A549 (cell line): ENCODE measurements at regions of chr5 and their contacts with region 1.

Region 1: DNA sequence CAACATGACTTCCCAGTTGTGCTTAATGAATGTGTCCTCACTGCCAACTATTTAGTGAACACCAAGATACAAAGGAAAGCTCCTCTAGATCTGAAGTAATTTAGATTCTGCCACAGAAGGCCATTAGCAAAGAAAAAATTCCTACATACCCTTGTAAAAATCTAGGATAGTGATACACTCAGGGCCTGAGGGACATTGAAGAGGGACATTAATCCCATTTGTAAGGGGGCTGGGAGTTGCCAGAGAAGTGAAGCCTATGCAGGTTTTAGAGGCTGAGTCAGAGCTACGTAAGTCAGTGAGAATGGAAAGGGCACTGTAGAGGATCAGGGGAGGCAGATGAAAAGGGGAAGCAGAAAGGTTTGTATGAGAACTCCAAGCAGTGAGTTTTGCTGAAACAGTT is 286.9 kb upstream of the TARS1 start:
- DNase-seq: no peak
- ATAC-seq: no peak
- H3K4me3 ChIP-seq: no peak overlapping the region
- H3K27ac ChIP-seq: no peak overlapping the region
- H3K4me1 ChIP-seq: peaks cover 4% of the 10 kb centered on the region
- CTCF ChIP-seq: no peak
- EP300 ChIP-seq: no peak
- POLR2A ChIP-seq: no peak
- RAD21 ChIP-seq: no peak

Region 2: GRCh38 chr5:32734827-32735378 is 418.9 kb before region 1 on chr5:
- CTCF ChIA-PET with region 1: no interaction called
- POLR2A ChIA-PET with region 1: no interaction called
- DNase-seq: no peak
- ATAC-seq: peak; percentile 43 to 51; a peak in 4 of 6 replicates
- H3K4me3 ChIP-seq: no peak overlapping the region
- H3K27ac ChIP-seq: no peak overlapping the region
- H3K4me1 ChIP-seq: peaks cover 4% of the 10 kb centered on the region; the same call in 1 of the 3 replicates
- CTCF ChIP-seq: no peak
- EP300 ChIP-seq: no peak
- POLR2A ChIP-seq: no peak
- RAD21 ChIP-seq: no peak

Region 3: DNA sequence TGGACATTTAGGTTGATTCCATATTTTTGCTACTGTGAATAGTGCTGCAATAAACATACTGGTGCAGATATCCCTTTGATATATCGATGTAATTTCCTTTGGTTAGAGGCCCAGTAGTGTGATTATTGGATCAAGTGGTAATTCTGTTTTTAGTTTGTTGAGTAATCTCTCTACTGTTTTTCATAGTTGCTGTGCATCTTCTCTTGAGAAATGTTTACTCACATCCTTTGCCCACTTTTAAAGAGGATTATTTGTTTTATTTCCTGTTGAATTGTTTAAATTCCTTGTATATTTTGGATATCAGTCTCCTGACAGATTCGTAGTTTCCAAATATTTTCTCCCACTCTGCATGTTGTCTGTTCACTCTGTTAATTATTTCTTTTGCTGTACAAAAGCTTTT is 65.7 kb before region 1 on chr5:
- CTCF ChIA-PET with region 1: no interaction called
- POLR2A ChIA-PET with region 1: no interaction called
- DNase-seq: no peak
- ATAC-seq: no peak
- H3K4me3 ChIP-seq: no peak overlapping the region
- H3K27ac ChIP-seq: no peak overlapping the region
- H3K4me1 ChIP-seq: peaks cover 19% of the 10 kb centered on the region; the same call in 2 of the 3 replicates
- CTCF ChIP-seq: no peak
- EP300 ChIP-seq: no peak; a peak in 1 of 5 replicates
- POLR2A ChIP-seq: no peak
- RAD21 ChIP-seq: no peak

Region 4: GRCh38 chr5:33129309-33129708 is 24.5 kb before region 1 on chr5:
- CTCF ChIA-PET with region 1: no interaction called
- POLR2A ChIA-PET with region 1: no interaction called
- DNase-seq: no peak
- ATAC-seq: no peak
- H3K4me3 ChIP-seq: no peak overlapping the region
- H3K27ac ChIP-seq: no peak overlapping the region
- H3K4me1 ChIP-seq: no peaks in the 10 kb centered on the region
- CTCF ChIP-seq: no peak
- EP300 ChIP-seq: no peak
- POLR2A ChIP-seq: no peak
- RAD21 ChIP-seq: no peak

Region 5: GRCh38 chr5:33166522-33166921 is 12.7 kb after region 1 on chr5:
- CTCF ChIA-PET with region 1: interaction called, 10 read pairs
- POLR2A ChIA-PET with region 1: no interaction called
- DNase-seq: no peak
- ATAC-seq: no peak
- H3K4me3 ChIP-seq: no peak overlapping the region
- H3K27ac ChIP-seq: no peak overlapping the region
- H3K4me1 ChIP-seq: no peaks in the 10 kb centered on the region
- CTCF ChIP-seq: no peak
- EP300 ChIP-seq: no peak
- POLR2A ChIP-seq: no peak
- RAD21 ChIP-seq: no peak

Region 6: DNA sequence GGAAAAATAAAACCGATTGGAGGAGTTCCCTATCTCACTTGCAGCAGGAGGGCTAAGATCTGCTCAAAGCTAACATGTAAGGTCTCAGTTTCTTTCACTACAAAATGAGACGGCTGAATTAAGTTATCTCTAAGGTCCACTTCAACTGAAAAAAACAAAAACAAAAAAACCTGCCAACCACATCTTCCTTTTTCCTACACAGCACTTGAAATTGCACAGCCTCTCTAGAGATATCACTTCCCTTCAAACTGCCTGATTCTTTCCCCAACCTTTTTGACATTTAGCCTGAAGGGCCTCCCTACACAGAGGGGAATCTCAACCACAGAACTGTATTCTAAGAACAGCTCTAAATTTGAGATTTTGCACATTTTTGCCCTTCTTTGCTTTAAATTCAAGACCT is 59.1 kb after region 1 on chr5:
- CTCF ChIA-PET with region 1: no interaction called
- POLR2A ChIA-PET with region 1: no interaction called
- DNase-seq: no peak
- ATAC-seq: no peak
- H3K4me3 ChIP-seq: no peak overlapping the region
- H3K27ac ChIP-seq: no peak overlapping the region
- H3K4me1 ChIP-seq: no peaks in the 10 kb centered on the region
- CTCF ChIP-seq: no peak
- EP300 ChIP-seq: no peak
- POLR2A ChIP-seq: no peak
- RAD21 ChIP-seq: no peak